ENCODE measurements at regions of chr19 and their contacts with region 1.

Region 1: GRCh38 chr19:55339048-55339888 is at the start of gene KMT5C:
- DNase-seq: peak; percentile 98

Region 2: GRCh38 chr19:55301459-55302317 is 37.6 kb before region 1 on chr19:
- CTCF ChIA-PET with region 1: interaction called, 4 read pairs
- POLR2A ChIA-PET with region 1: interaction called, 13 read pairs
- DNase-seq: peak; percentile 94

Region 3: GRCh38 chr19:55376241-55376933 is 37.1 kb after region 1 on chr19 and contains the start of gene TMEM190:
- CTCF ChIA-PET with region 1: no interaction called
- POLR2A ChIA-PET with region 1: interaction called, 12 read pairs
- DNase-seq: no peak

Region 4: GRCh38 chr19:55391702-55392615 is 52.7 kb after region 1 on chr19:
- CTCF ChIA-PET with region 1: no interaction called
- POLR2A ChIA-PET with region 1: interaction called, 14 read pairs
- DNase-seq: no peak